Activated naive CD4-positive, alpha-beta T cell treated with anti-CD3 and anti-CD28 coated beads for 36 hours (primary cell): ENCODE measurements at regions of chr6 and their contacts with region 1.

Region 1: GRCh38 chr6:144095331-144096002 is at the start of gene SF3B5:
- DNase-seq: peak; percentile 99
- H3K4me3 Mint-ChIP-seq: peak within 1 kb of the TSS; percentile 91
- H3K27ac Mint-ChIP-seq: peak within 1 kb of the TSS; percentile 91
- H3K4me1 Mint-ChIP-seq: peaks cover 29% of the 10 kb centered on the region
- H3K27me3 Mint-ChIP-seq: no peaks in the 10 kb centered on the region
- total RNA-seq, gene SF3B5: 170 to 176 TPM

Region 2: GRCh38 chr6:143450453-143451371 is 644.8 kb before region 1 on chr6 and contains the starts of genes ADAT2 and PEX3:
- CTCF ChIA-PET with region 1: no interaction called
- intact Hi-C with region 1: loop called (anchors 1 kb)
- DNase-seq: peak; percentile 96
- H3K4me3 Mint-ChIP-seq: peak within 1 kb of the TSS; percentile 100
- H3K27ac Mint-ChIP-seq: peak within 1 kb of the TSS; percentile 97
- H3K4me1 Mint-ChIP-seq: peaks cover 50% of the 10 kb centered on the region
- H3K27me3 Mint-ChIP-seq: no peaks in the 10 kb centered on the region
- total RNA-seq, gene ADAT2: 36.8 to 39.5 TPM
- total RNA-seq, gene PEX3: 10.8 to 11.9 TPM

Region 3: DNA sequence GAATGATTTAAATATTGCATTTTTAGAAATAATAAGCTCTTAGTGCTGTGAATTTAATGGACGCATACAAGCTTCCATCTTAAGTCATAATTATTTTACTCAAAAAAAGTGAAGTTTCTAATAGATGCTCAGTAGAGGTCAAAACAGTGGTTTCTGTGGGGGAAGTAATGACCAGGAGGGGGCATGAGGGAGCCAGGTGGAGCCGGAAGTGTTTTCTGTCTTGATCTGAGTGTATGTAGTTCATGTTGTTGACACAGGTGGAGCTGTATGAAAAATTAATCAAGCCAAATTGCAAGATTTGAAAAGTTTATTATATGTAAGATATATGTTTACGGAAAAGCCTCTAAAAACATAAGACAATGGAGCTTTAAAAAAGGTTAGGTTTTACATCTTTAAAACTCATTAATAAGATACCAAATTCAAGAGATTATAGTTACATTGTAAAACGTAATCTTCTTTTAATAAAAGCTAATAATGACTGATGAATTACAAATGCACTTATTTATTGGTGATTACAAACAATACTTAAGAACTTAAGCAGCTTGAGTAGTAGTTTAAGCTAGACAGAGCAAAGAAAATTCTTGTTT is 155.4 kb before region 1 on chr6:
- CTCF ChIA-PET with region 1: interaction called, 4 read pairs
- intact Hi-C with region 1: loop called (anchors 1 kb)
- DNase-seq: peak; percentile 76
- H3K4me3 Mint-ChIP-seq: no peak overlapping the region
- H3K27ac Mint-ChIP-seq: no peak overlapping the region
- H3K4me1 Mint-ChIP-seq: no peaks in the 10 kb centered on the region
- H3K27me3 Mint-ChIP-seq: no peaks in the 10 kb centered on the region

Region 4: DNA sequence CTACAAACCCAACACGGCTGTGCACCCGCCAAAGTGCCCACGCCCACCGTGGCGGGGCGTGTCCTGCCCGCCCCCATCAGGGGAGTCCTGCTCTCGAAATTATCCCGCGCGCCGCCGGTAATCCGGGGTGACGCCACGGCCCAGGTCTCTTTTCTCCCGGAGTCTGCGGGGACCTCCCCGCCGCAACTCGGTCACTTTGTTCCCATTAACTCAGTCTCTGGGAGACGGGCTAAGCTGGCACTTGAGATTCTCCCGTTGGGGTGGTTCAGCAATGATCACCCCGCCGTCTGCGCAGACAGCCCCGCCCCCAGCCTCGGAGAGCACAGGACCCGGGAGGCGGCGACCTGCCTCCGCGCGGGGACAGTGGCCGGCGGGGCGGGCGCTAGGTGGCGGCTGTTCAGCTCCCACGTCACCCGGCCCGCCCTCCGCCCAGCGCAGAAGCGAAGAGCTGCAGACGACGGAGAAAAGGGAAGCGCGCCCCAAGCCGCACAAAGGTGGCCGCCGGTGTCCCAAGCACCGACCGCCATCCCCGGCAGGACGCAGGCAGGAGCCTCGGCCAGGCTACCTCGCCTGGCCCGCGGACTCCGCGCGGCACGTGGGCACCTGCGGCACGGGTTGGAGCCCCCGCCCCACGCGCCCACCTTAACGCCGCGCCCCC is 31.6 kb before region 1 on chr6:
- CTCF ChIA-PET with region 1: interaction called, 3 read pairs
- intact Hi-C with region 1: loop called (anchors 1 kb)
- DNase-seq: peak; percentile 86
- H3K4me3 Mint-ChIP-seq: peak overlapping the region; percentile 75
- H3K27ac Mint-ChIP-seq: peak overlapping the region; percentile 43
- H3K4me1 Mint-ChIP-seq: peaks cover 40% of the 10 kb centered on the region
- H3K27me3 Mint-ChIP-seq: no peaks in the 10 kb centered on the region

Region 5: GRCh38 chr6:144140867-144141266 is 45.4 kb after region 1 on chr6:
- CTCF ChIA-PET with region 1: no interaction called
- intact Hi-C with region 1: no loop called
- DNase-seq: no peak
- H3K4me3 Mint-ChIP-seq: no peak overlapping the region
- H3K27ac Mint-ChIP-seq: no peak overlapping the region
- H3K4me1 Mint-ChIP-seq: no peaks in the 10 kb centered on the region
- H3K27me3 Mint-ChIP-seq: peaks cover 3% of the 10 kb centered on the region

Region 6: GRCh38 chr6:144179828-144180227 is 84.4 kb after region 1 on chr6:
- CTCF ChIA-PET with region 1: interaction called, 3 read pairs
- intact Hi-C with region 1: loop called (anchors 1 kb)
- DNase-seq: no peak
- H3K4me3 Mint-ChIP-seq: no peak overlapping the region
- H3K27ac Mint-ChIP-seq: no peak overlapping the region
- H3K4me1 Mint-ChIP-seq: peaks cover 55% of the 10 kb centered on the region
- H3K27me3 Mint-ChIP-seq: no peaks in the 10 kb centered on the region

Region 7: GRCh38 chr6:144377586-144378210 is 282.2 kb after region 1 on chr6:
- CTCF ChIA-PET with region 1: no interaction called
- intact Hi-C with region 1: no loop called
- DNase-seq: peak; percentile 43
- H3K4me3 Mint-ChIP-seq: no peak overlapping the region
- H3K27ac Mint-ChIP-seq: no peak overlapping the region
- H3K4me1 Mint-ChIP-seq: peaks cover 45% of the 10 kb centered on the region
- H3K27me3 Mint-ChIP-seq: no peaks in the 10 kb centered on the region